ENCODE measurements at regions of chr1 and their contacts with region 1.

Region 1: DNA sequence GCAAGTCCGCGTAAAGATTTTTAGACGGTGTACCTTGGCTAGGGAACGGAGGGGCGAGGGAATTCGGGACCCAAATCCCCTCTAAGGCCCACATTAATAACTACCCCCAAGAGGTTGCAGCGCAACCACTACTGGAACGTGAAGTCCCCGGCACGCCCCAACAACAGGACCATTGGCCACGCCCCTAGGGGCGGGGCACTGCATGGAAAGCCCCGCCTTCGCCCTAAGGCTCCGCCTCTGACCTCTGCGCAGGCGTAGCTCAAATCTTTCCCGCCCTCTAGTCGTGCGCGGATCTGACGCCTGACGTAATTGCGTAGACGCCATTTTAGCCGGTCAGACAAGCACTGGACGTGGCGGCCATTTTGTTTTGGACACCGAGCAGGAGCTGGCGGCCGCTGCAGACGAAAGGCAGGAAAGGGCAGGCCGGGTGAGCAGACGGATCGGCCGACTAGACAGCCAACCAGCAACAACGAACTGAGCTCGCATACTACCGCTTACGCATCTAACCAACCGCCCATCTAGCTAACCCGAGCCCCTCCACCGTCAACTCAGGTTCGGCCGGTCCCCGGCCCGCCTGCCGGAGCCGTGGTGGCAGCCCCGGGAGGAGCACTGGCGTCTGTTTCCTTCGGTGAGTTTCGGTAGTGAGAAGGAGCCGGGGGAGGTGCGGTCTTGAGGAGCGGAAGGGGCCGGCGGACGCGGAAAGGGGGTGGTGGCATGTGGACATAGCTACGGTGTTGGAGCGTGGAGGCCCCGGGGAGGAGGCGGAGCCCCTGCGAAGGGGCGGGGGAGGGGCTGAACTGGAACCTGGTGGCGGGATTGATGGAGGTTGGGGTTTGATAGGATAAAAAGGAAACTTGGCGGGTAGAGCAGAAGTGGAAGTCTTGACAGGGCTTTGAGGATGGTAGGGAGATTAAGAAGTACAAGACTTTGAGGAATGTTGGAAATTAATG is at the start of gene CHTOP:
- DNase-seq: peak; percentile 96 to 98 (median 97)
- H3K4me3 ChIP-seq: peak within 1 kb of the TSS; percentile 99
- H3K4me3 Mint-ChIP-seq: peak within 1 kb of the TSS; percentile 94 to 100 (median 98)
- H3K27ac ChIP-seq: peak within 1 kb of the TSS; percentile 100
- H3K27ac Mint-ChIP-seq: peak within 1 kb of the TSS; percentile 98 to 100 (median 100)
- H3K4me1 ChIP-seq: peaks cover 35% of the 10 kb centered on the region
- H3K4me1 Mint-ChIP-seq: peaks cover 26 to 51% (median 39%) of the 10 kb centered on the region in 4 donors
- H3K27me3 ChIP-seq: no peaks in the 10 kb centered on the region
- H3K27me3 Mint-ChIP-seq: no peaks in the 10 kb centered on the region
- total RNA-seq, gene CHTOP: 144 to 149 TPM

Region 2: DNA sequence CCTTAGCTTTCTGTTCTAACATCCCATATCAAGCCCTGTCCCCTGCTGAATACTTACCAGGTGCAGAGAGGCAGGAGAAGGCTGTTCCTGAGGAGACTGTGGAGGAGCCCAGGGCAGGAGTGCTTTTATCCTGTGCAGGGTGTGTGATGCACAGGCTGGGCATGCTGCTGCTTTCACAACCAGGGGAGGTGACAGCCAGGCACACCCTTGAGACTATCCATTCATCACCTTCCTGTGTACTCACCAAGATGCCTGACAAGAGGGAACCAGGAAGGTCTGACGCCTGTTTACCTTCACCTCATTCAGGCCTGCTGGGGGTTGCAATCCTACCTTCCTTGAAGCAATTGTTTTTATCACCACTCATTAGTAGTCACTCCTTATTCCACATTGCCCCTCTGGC is 1067.3 kb before region 1 on chr1 and contains the start of gene LCE3E:
- CTCF ChIA-PET with region 1: no interaction called
- POLR2A ChIA-PET with region 1: no interaction called
- intact Hi-C with region 1: no loop called
- DNase-seq: no peak
- H3K4me3 ChIP-seq: no peak within 1 kb of the TSS
- H3K4me3 Mint-ChIP-seq: no peak within 1 kb of the TSS
- H3K27ac ChIP-seq: no peak within 1 kb of the TSS
- H3K27ac Mint-ChIP-seq: no peak within 1 kb of the TSS
- H3K4me1 ChIP-seq: no peaks in the 10 kb centered on the region
- H3K4me1 Mint-ChIP-seq: no peaks in the 10 kb centered on the region
- H3K27me3 ChIP-seq: no peaks in the 10 kb centered on the region
- H3K27me3 Mint-ChIP-seq: peaks cover 6 to 8% of the 10 kb centered on the region in 2 donors
- total RNA-seq, gene LCE3E: not detected

Region 3: DNA sequence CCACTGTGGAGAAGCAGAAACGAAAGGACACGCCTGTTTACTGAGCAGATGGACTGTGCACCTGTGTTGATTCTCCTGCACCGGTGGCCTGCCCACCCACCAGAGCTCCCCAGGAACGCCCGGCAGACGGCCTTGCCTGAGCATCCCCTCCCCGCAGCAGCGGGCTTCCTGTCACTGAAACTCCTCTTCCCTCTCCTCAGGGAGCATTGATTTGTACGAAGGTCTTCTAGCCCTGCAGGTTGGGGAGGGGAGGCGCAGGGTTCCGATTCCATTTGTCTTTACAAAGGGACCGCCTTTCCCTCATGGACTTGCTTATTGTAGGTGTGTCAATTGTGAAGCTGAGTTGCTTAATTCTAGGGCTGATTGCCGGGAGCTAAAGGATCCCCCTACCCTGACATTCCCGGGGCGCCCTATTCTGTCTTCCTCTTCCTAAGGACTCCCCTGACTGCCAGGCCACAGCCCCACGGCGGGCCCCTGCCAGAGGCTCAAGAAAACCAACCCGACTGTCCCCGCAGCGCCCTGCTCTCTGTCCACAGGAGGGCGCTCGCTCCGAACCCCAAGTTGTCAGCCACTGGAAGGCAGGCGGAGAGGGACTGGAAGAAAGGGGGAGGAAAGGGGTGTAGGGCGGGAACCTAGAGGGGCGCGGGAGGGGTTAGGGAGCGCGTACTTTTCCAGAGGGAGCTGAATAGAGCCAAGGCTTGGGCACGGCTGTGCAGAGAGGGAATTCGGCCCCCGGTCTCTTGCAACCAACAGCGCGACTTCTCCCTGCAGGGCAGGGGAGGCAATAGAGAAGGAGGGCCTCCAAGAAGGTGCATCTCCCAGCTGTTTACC is 101.0 kb before region 1 on chr1:
- CTCF ChIA-PET with region 1: interaction called, 12 read pairs
- POLR2A ChIA-PET with region 1: interaction called, 38 read pairs
- intact Hi-C with region 1: loop called (anchors 5 kb)
- DNase-seq: peak; percentile 76 to 82 (median 78)
- H3K4me3 ChIP-seq: peak overlapping the region; percentile 55 to 79
- H3K4me3 Mint-ChIP-seq: peak overlapping the region; percentile 88 to 98 (median 96)
- H3K27ac ChIP-seq: peak overlapping the region; percentile 92
- H3K27ac Mint-ChIP-seq: peak overlapping the region; percentile 88 to 98 (median 94)
- H3K4me1 ChIP-seq: peaks cover 62% of the 10 kb centered on the region
- H3K4me1 Mint-ChIP-seq: peaks cover 44 to 80% (median 57%) of the 10 kb centered on the region in 4 donors
- H3K27me3 ChIP-seq: no peaks in the 10 kb centered on the region
- H3K27me3 Mint-ChIP-seq: no peaks in the 10 kb centered on the region

Region 4: DNA sequence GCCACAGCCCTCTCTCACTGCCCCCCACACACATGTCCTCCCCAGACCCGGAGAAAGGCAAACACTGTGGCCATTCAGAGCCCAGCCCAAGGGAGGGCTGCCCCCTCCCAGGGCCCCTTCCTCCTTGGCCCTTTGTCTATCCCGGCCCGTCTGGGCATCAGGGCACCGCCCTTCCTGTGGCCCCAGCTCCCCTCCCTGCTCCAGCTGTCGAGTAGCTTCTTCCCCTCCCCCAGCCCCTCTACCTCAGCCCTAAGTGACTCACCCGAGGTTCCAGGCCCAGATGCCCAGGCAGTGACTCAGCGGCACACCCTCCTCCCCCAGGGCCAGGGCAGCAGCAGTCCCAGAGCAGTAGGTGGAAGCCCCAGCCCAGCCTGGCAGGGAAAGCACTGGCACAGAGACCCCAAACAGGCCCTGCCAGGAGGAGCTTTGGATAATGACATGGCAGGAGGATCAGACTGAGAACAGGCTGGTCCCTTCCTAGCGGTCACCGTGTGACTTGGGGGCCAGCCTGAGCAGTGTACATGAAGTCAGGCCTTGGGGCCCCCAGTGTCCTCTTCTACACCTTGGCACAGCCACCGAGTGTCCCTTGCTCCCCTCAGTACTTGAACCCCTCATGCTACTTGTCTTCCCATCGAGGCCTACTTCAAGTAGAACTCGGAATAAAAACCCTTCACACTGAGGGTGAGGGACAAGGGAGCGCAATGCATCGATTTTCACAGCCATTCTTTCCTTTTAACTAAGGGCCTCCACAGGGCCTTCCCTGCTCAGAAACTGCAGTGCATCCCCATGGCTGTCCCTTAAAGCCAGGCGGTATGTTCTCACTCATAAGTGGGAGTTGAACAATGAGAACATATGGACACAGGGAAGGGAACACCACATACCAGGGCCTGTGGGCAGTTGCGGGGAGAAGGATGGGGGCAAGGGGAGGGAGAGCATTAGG is 67.3 kb before region 1 on chr1:
- CTCF ChIA-PET with region 1: interaction called, 5 read pairs
- POLR2A ChIA-PET with region 1: interaction called, 8 read pairs
- intact Hi-C with region 1: loop called (anchors 2 kb)
- DNase-seq: peak; percentile 45 to 93 (median 55)
- H3K4me3 ChIP-seq: peak overlapping the region in 1 of 2 donors; percentile 16
- H3K4me3 Mint-ChIP-seq: peak overlapping the region in 7 of 8 donors; percentile 55 to 81 (median 65)
- H3K27ac ChIP-seq: peak overlapping the region; percentile 42
- H3K27ac Mint-ChIP-seq: peak overlapping the region; percentile 90 to 94 (median 92)
- H3K4me1 ChIP-seq: peaks cover 35% of the 10 kb centered on the region
- H3K4me1 Mint-ChIP-seq: peaks cover 22 to 36% (median 28%) of the 10 kb centered on the region in 4 donors
- H3K27me3 ChIP-seq: no peaks in the 10 kb centered on the region
- H3K27me3 Mint-ChIP-seq: no peaks in the 10 kb centered on the region

Region 5: DNA sequence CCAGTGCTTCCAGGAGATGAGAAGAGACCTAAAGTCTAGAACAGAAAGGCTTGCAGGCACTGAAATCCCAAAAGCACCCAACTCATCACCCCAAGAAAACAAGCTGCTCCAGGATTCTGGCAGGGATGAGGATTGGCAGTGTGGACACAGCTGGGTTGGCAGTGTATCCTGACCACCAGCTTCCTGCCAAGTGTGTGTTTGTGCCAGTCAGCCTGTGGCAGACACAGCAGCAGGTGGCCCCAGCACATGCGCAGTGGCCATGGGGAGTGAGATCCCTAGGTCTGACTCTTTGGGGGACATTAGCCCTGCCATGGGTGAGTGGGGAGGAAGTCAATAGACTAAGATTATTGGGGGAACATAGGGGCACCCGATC is 15.9 kb after region 1 on chr1:
- CTCF ChIA-PET with region 1: interaction called, 6 read pairs
- POLR2A ChIA-PET with region 1: interaction called, 80 read pairs
- intact Hi-C with region 1: no loop called
- DNase-seq: no peak
- H3K4me3 ChIP-seq: no peak overlapping the region
- H3K4me3 Mint-ChIP-seq: peak overlapping the region in 7 of 8 donors; percentile 35 to 76 (median 61)
- H3K27ac ChIP-seq: peak overlapping the region; percentile 17
- H3K27ac Mint-ChIP-seq: peak overlapping the region in 6 of 7 donors; percentile 54 to 91 (median 88)
- H3K4me1 ChIP-seq: peaks cover 26% of the 10 kb centered on the region
- H3K4me1 Mint-ChIP-seq: peaks cover 23 to 48% (median 33%) of the 10 kb centered on the region in 4 donors
- H3K27me3 ChIP-seq: no peaks in the 10 kb centered on the region
- H3K27me3 Mint-ChIP-seq: no peaks in the 10 kb centered on the region

Region 6: DNA sequence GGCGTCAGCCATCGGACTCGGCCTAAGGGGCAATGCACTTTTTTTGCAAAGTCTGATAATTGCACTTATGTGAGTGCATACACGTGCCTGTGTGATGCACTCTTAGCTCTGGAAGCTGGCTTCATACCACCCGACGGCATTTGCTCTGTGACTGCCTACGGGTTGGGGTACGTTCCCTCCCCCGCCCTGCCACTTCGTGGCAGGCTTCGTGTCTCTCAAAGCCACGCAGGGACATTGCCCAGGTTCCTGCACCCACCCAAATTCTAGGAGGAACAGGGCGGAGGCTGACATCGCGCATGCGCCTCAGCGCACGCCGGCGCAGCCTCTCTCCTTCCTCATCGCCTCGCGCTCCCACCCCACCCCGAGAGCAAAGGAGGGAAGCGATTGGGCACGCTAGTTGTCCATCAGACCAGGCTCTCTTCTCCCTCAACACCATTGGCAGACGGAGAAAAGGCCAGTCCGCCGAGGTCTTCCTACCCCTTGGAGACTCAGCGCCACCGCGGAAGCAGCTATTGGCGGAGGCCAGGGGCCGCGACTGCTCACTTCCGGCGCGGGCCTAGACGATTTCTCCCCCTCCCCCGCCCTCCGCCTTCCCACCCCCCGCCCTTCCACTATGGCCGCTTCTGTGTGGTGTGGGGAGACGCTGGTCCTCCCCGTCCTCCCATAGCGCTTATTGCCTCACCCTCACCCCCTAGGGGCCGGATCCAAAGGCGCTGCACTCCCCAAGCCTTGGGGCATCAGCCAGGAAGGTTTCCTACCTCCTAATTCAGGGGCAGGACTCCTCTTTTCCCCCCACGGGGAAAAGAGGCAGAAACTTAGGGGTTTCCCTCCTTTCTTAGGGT is 93.7 kb after region 1 on chr1 and contains the start of gene INTS3:
- CTCF ChIA-PET with region 1: no interaction called
- POLR2A ChIA-PET with region 1: interaction called, 9 read pairs
- intact Hi-C with region 1: loop called (anchors 2 kb)
- DNase-seq: peak; percentile 98 to 100 (median 99)
- H3K4me3 ChIP-seq: peak within 1 kb of the TSS; percentile 79 to 98
- H3K4me3 Mint-ChIP-seq: peak within 1 kb of the TSS; percentile 88 to 96 (median 93)
- H3K27ac ChIP-seq: peak within 1 kb of the TSS; percentile 93
- H3K27ac Mint-ChIP-seq: peak within 1 kb of the TSS; percentile 93 to 99 (median 97)
- H3K4me1 ChIP-seq: peaks cover 32% of the 10 kb centered on the region
- H3K4me1 Mint-ChIP-seq: peaks cover 19 to 36% (median 29%) of the 10 kb centered on the region in 4 donors
- H3K27me3 ChIP-seq: no peaks in the 10 kb centered on the region
- H3K27me3 Mint-ChIP-seq: no peaks in the 10 kb centered on the region
- total RNA-seq, gene INTS3: 49.1 to 53.0 TPM